IMR-90 (cell line): ENCODE measurements at regions of chr13 and their contacts with region 1.

Region 1: GRCh38 chr13:30114571-30115256 is 192.6 kb downstream of the KATNAL1 start:
- DNase-seq: peak; percentile 82
- ATAC-seq: peak; percentile 79
- H3K4me3 ChIP-seq: peak overlapping the region; percentile 61
- H3K27ac ChIP-seq: no peak overlapping the region
- H3K4me1 ChIP-seq: peaks cover 3% of the 10 kb centered on the region; the same call in 1 of the 2 replicates
- H3K27me3 ChIP-seq: no peaks in the 10 kb centered on the region; the same call in 1 of the 2 replicates
- CTCF ChIP-seq: peak; percentile 88
- POLR2A ChIP-seq: no peak
- RAD21 ChIP-seq: peak; percentile 89

Region 2: DNA sequence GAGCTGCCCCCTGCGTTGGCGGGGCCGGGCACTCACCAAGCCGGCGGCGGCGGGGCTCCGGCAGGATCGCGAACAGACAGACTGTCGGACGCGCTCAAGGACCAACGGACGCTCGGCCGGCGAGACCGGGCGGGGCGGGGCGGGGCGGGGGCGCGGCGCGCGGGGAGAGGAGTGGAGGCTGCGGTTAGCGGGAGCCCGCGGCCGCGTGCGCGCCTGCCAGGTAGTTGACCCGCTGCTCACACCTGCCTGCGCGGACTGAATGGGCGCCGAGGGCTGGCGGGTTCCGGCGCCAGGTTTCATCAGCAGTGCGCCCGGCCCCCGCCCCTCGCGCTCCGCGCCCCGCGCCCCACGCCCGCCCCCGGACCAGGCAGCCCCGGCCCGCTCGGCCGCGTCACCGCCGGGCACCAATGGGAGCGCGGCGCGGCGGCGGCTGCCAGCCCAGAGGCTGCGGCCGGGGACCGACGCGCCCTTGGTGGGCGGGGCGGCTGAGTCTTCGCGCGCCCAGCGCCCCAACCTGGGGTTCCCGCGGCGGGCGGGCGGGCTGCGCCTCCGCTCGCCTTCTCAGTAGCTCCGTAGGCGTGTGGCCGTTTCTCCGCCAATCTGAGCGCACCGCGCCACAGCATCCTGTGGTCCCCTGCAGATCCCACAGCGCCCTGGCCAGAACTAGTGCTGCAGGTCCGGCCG is 519.2 kb before region 1 on chr13 and contains the start of gene SLC7A1:
- CTCF ChIA-PET with region 1: no interaction called
- POLR2A ChIA-PET with region 1: no interaction called
- dilution Hi-C with region 1: no loop called
- in situ Hi-C with region 1: no loop called
- intact Hi-C with region 1: loop called (anchors 2 kb)
- DNase-seq: peak; percentile 80
- ATAC-seq: peak; percentile 96
- H3K4me3 ChIP-seq: peak within 1 kb of the TSS; percentile 85
- H3K27ac ChIP-seq: peak within 1 kb of the TSS; percentile 52
- H3K4me1 ChIP-seq: peaks cover 8% of the 10 kb centered on the region
- H3K27me3 ChIP-seq: no peaks in the 10 kb centered on the region
- CTCF ChIP-seq: 0 out of 2 replicates have a peak, but pooled peaks have one; percentile 12
- POLR2A ChIP-seq: peak; percentile 43; the same call in 1 of the 2 replicates
- RAD21 ChIP-seq: no peak; the same call in 1 of the 2 replicates
- total RNA-seq, gene SLC7A1: 9.7 and 10.3 TPM in 2 replicates

Region 3: GRCh38 chr13:29850224-29850898 is 264.4 kb before region 1 on chr13 and contains the start of gene UBL3:
- CTCF ChIA-PET with region 1: interaction called, 6 read pairs
- POLR2A ChIA-PET with region 1: interaction called, 3 read pairs
- dilution Hi-C with region 1: no loop called
- in situ Hi-C with region 1: loop called (anchors 5 kb)
- intact Hi-C with region 1: loop called (anchors 1 kb)
- DNase-seq: peak; percentile 95
- ATAC-seq: peak; percentile 91
- H3K4me3 ChIP-seq: peak within 1 kb of the TSS; percentile 81
- H3K27ac ChIP-seq: peak within 1 kb of the TSS; percentile 98
- H3K4me1 ChIP-seq: peaks cover 4% of the 10 kb centered on the region; the same call in 1 of the 2 replicates
- H3K27me3 ChIP-seq: no peaks in the 10 kb centered on the region
- CTCF ChIP-seq: no peak
- POLR2A ChIP-seq: peak; percentile 86
- RAD21 ChIP-seq: no peak
- total RNA-seq, gene UBL3: 19.9 and 30.3 TPM in 2 replicates

Region 4: DNA sequence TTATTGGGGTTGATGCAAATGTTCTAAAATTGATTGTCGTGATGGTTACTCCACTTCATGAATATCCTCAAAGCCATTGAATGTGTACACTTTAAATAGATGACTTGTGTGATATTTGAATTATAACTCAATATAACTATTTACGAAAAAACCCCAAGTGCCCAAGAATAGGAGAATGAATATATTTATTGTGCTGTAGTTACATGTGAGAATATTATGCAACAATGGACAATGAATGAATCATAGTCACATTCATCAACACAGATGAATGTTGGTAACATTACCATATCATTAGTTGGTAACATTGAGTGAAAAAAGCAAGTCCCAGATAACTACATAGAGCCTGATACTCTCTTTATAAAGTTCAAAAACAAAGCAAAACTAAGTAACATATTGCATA is 136.5 kb before region 1 on chr13:
- CTCF ChIA-PET with region 1: interaction called, 5 read pairs
- POLR2A ChIA-PET with region 1: no interaction called
- dilution Hi-C with region 1: no loop called
- in situ Hi-C with region 1: no loop called
- intact Hi-C with region 1: loop called (anchors 2 kb)
- DNase-seq: peak; percentile 18
- ATAC-seq: no peak
- H3K4me3 ChIP-seq: no peak overlapping the region
- H3K27ac ChIP-seq: no peak overlapping the region
- H3K4me1 ChIP-seq: peaks cover 3% of the 10 kb centered on the region; the same call in 1 of the 2 replicates
- H3K27me3 ChIP-seq: no peaks in the 10 kb centered on the region
- CTCF ChIP-seq: no peak
- POLR2A ChIP-seq: no peak
- RAD21 ChIP-seq: no peak

Region 5: GRCh38 chr13:30204564-30204963 is 89.8 kb after region 1 on chr13:
- CTCF ChIA-PET with region 1: no interaction called
- POLR2A ChIA-PET with region 1: no interaction called
- dilution Hi-C with region 1: no loop called
- in situ Hi-C with region 1: no loop called
- intact Hi-C with region 1: no loop called
- DNase-seq: no peak
- ATAC-seq: no peak
- H3K4me3 ChIP-seq: no peak overlapping the region
- H3K27ac ChIP-seq: no peak overlapping the region
- H3K4me1 ChIP-seq: no peaks in the 10 kb centered on the region
- H3K27me3 ChIP-seq: no peaks in the 10 kb centered on the region
- CTCF ChIP-seq: no peak
- POLR2A ChIP-seq: no peak
- RAD21 ChIP-seq: no peak